ENCODE measurements at regions of chr13 and their contacts with region 1.

Region 1: GRCh38 chr13:113448885-113449692 is 4.2 kb downstream of the ADPRHL1 start:
- DNase-seq: peak; percentile 96
- ATAC-seq: peak; percentile 84
- H3K4me3 ChIP-seq: peak overlapping the region; percentile 92 to 97
- H3K27ac ChIP-seq: peak overlapping the region; percentile 94
- H3K4me1 ChIP-seq: peaks cover 9 to 24% of the 10 kb centered on the region in 2 experiments
- H3K27me3 ChIP-seq: no peaks in the 10 kb centered on the region
- CTCF ChIP-seq: no peak
- POLR2A ChIP-seq: no peak
- RAD21 ChIP-seq: no peak

Region 2: GRCh38 chr13:112942689-112943308 is 506.3 kb before region 1 on chr13:
- CTCF ChIA-PET with region 1: interaction called, 5 read pairs
- POLR2A ChIA-PET with region 1: no interaction called
- RAD21 ChIA-PET with region 1: no interaction called
- intact Hi-C with region 1: loop called (anchors 2 kb)
- DNase-seq: peak; percentile 91
- ATAC-seq: peak; percentile 94
- H3K4me3 ChIP-seq: peak overlapping the region; percentile 43 to 63
- H3K27ac ChIP-seq: peak overlapping the region; percentile 18; the same call in 1 of the 2 replicates
- H3K4me1 ChIP-seq: peaks cover 4 to 16% of the 10 kb centered on the region in 2 experiments; a peak in 3 of 4 replicates
- H3K27me3 ChIP-seq: no peaks in the 10 kb centered on the region
- CTCF ChIP-seq: peak; percentile 92 to 98 (median 97)
- POLR2A ChIP-seq: no peak
- RAD21 ChIP-seq: peak; percentile 95

Region 3: GRCh38 chr13:113208424-113209335 is 240.4 kb before region 1 on chr13 and contains the start of gene PCID2:
- CTCF ChIA-PET with region 1: interaction called, 9 read pairs
- POLR2A ChIA-PET with region 1: no interaction called
- RAD21 ChIA-PET with region 1: interaction called in 1 of 2 experiments, 3 read pairs
- intact Hi-C with region 1: loop called (anchors 1 kb)
- DNase-seq: peak; percentile 82
- ATAC-seq: peak; percentile 72
- H3K4me3 ChIP-seq: peak within 1 kb of the TSS; percentile 56 to 74
- H3K27ac ChIP-seq: peak within 1 kb of the TSS; percentile 98
- H3K4me1 ChIP-seq: peaks cover 14 to 23% of the 10 kb centered on the region in 2 experiments
- H3K27me3 ChIP-seq: no peaks in the 10 kb centered on the region
- CTCF ChIP-seq: no peak
- POLR2A ChIP-seq: peak; percentile 70
- RAD21 ChIP-seq: no peak
- total RNA-seq, gene PCID2: 73.3 TPM

Region 4: DNA sequence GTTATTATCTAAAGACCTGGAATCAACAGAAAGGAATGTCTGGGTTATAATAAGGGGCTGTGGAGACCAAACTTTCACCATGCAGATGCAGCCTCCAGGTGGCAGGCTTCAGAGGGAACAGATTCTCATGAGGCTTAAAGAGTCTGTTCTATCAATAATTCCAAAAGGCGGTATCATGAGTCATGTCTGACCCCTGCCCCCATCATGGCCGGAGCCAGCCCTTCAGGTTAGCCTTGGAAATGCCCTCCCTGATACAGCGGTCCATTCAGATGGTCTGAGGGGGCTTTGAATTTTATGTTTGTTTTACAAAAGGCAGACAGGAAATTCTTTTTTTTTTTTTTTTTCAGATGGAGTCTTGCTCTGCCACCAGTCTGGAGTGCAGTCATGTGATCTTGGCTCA is 173.7 kb before region 1 on chr13:
- CTCF ChIA-PET with region 1: no interaction called
- POLR2A ChIA-PET with region 1: no interaction called
- RAD21 ChIA-PET with region 1: no interaction called
- intact Hi-C with region 1: loop called (anchors 1 kb)
- DNase-seq: peak; percentile 59
- ATAC-seq: peak; percentile 96
- H3K4me3 ChIP-seq: no peak overlapping the region
- H3K27ac ChIP-seq: no peak overlapping the region
- H3K4me1 ChIP-seq: peaks cover 0 to 11% of the 10 kb centered on the region in 2 experiments; a peak in 2 of 4 replicates
- H3K27me3 ChIP-seq: no peaks in the 10 kb centered on the region
- CTCF ChIP-seq: peak; percentile 66 to 81 (median 70); a peak in 5 of 6 replicates
- POLR2A ChIP-seq: no peak
- RAD21 ChIP-seq: peak; percentile 76

Region 5: DNA sequence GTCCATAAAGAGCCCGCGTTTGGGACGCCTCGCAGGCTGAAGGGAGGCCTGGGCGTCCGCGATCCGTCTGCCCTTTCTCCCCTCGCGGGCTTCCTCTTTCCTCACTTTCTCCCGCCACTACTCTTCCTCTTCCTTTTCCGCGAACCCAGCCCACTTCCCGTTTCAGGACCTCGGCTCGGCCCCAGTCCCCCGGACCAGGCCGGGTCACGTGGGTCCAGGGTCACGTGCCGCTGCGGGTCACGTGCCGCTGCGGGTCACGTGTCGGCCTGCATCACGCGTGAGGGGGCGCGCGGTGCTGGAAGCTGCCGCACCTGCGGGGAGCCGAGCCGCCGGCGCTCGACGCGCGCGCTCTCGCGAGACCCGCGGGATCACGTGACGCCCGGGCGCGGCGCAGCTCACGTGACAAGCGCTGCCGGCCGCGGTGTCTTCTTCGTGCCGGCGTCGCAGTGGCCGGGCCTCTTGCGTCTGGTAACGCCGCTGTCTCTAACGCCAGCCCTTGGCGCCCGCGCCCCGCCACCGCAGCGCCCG is 152.2 kb before region 1 on chr13 and contains the start of gene LAMP1:
- CTCF ChIA-PET with region 1: no interaction called
- POLR2A ChIA-PET with region 1: no interaction called
- RAD21 ChIA-PET with region 1: no interaction called
- intact Hi-C with region 1: loop called (anchors 2 kb)
- DNase-seq: peak; percentile 91
- ATAC-seq: peak; percentile 90
- H3K4me3 ChIP-seq: peak within 1 kb of the TSS; percentile 92 to 98
- H3K27ac ChIP-seq: peak within 1 kb of the TSS; percentile 74
- H3K4me1 ChIP-seq: peaks cover 8 to 27% of the 10 kb centered on the region in 2 experiments; a peak in 3 of 4 replicates
- H3K27me3 ChIP-seq: peaks cover 8% of the 10 kb centered on the region; the same call in 1 of the 2 replicates
- CTCF ChIP-seq: no peak
- POLR2A ChIP-seq: no peak
- RAD21 ChIP-seq: no peak
- total RNA-seq, gene LAMP1: 158 TPM

Region 6: DNA sequence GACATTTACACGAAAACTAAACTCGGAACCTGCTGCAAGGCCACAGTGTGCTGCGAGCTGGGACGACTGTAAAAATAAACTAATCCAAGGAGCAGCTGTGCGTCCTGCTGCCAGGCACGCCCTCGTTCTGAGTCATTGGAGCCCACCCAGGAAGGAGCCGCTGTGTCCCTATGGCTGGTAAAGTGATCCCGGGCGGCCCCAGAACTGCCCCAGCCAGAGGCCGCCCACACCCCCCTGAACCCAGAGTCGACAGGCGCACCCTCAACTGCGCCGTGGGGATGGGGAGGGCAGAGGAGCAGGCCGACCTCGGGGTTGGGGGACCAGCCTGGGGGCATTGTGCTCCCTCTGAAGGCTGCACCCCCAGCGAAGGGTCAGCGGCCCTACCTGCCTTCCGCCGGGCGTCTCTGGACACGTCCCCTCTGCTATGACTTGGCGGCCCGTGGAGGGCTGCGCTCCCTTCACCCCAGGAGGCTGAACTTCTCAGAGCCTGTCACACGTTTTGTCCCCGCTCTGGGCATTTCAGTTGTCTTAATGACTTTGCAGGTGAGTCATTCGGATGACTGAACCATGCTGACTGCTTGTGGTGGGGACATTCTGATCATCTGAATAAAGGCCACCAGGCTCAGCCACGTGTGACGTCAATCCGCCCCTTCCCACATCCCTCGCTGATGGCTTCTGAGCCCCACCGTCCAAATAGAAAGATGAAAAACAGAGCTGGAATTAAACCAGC is 38.5 kb before region 1 on chr13:
- CTCF ChIA-PET with region 1: no interaction called
- POLR2A ChIA-PET with region 1: interaction called, 5 read pairs
- RAD21 ChIA-PET with region 1: no interaction called
- intact Hi-C with region 1: loop called (anchors 2 kb)
- DNase-seq: peak; percentile 89
- ATAC-seq: peak; percentile 88
- H3K4me3 ChIP-seq: peak overlapping the region; percentile 37 to 59
- H3K27ac ChIP-seq: peak overlapping the region; percentile 66
- H3K4me1 ChIP-seq: peaks cover 17 to 23% of the 10 kb centered on the region in 2 experiments
- H3K27me3 ChIP-seq: peaks cover 3% of the 10 kb centered on the region; the same call in 1 of the 2 replicates
- CTCF ChIP-seq: no peak
- POLR2A ChIP-seq: no peak
- RAD21 ChIP-seq: no peak

Region 7: GRCh38 chr13:114161644-114162532 is 712.8 kb after region 1 on chr13:
- CTCF ChIA-PET with region 1: no interaction called
- POLR2A ChIA-PET with region 1: no interaction called
- RAD21 ChIA-PET with region 1: no interaction called
- intact Hi-C with region 1: no loop called
- DNase-seq: no peak
- ATAC-seq: no peak
- H3K4me3 ChIP-seq: no peak overlapping the region
- H3K27ac ChIP-seq: no peak overlapping the region
- H3K4me1 ChIP-seq: peaks cover 0 to 4% of the 10 kb centered on the region in 2 experiments; a peak in 2 of 4 replicates
- H3K27me3 ChIP-seq: peaks cover 18% of the 10 kb centered on the region; the same call in 1 of the 2 replicates
- CTCF ChIP-seq: no peak
- POLR2A ChIP-seq: no peak
- RAD21 ChIP-seq: no peak

Measured in HCT116 (cell line).